GM10248 (cell line): ENCODE measurements at regions of chr3 and their contacts with region 1.

Region 1: DNA sequence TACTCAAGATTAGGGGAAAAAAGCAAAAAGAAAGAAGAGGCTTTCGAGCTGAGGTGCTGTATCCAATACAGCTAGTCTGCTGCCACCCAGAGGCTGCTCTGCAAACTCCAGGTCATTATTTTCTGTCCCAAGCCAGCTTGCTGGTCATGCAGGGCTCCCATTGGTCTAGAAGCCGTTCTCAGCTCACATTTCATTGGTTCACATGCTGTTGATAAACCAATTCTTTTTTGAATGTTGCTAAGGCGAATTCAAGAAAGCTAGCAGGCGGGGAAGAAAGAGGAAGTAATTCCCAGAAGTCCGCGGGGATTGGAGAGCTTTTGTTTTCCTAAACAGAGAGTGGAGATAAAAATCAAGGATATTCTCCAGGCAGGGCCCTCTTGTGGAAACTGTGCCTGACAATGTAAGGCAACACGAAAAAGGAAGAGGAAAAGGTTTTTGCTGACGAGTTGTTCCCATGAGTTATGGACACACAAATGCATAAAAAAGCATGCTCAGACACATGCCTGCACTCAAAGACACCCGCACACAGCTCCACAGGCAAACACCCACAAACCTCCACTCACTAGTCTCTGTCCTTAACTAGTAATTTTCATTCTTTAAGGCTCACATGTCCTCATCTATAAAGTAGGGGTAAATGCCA is 33.4 kb downstream of the FSTL1 start:
- DNase-seq: peak; percentile 91
- CTCF ChIP-seq: peak; percentile 73

Region 2: GRCh38 chr3:119517112-119517511 is 900.3 kb before region 1 on chr3:
- CTCF ChIA-PET with region 1: no interaction called
- POLR2A ChIA-PET with region 1: no interaction called
- DNase-seq: no peak
- CTCF ChIP-seq: no peak

Region 3: DNA sequence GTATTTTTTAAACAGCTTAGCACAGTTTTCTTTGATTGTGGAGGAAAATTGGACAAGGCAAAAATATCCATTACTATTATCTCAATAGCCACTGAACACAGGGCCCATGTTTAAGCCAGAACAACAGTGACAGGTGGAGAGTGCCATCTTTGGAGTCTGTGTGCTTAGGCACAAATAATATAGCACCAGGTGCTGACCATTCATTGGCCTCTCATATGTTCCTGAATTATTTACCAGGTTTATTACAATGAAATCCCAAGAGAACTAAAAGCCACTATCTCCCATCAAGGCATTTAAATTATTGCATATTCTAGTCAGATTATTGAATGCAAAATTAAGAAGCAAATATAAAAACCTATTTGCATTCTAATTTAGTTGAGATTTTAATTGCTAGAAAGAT is 172.0 kb before region 1 on chr3:
- CTCF ChIA-PET with region 1: interaction called, 121 read pairs
- POLR2A ChIA-PET with region 1: no interaction called
- DNase-seq: no peak
- CTCF ChIP-seq: no peak

Region 4: GRCh38 chr3:120357807-120358206 is 59.6 kb before region 1 on chr3:
- CTCF ChIA-PET with region 1: interaction called, 12 read pairs
- POLR2A ChIA-PET with region 1: no interaction called
- DNase-seq: no peak
- CTCF ChIP-seq: peak; percentile 14

Region 5: DNA sequence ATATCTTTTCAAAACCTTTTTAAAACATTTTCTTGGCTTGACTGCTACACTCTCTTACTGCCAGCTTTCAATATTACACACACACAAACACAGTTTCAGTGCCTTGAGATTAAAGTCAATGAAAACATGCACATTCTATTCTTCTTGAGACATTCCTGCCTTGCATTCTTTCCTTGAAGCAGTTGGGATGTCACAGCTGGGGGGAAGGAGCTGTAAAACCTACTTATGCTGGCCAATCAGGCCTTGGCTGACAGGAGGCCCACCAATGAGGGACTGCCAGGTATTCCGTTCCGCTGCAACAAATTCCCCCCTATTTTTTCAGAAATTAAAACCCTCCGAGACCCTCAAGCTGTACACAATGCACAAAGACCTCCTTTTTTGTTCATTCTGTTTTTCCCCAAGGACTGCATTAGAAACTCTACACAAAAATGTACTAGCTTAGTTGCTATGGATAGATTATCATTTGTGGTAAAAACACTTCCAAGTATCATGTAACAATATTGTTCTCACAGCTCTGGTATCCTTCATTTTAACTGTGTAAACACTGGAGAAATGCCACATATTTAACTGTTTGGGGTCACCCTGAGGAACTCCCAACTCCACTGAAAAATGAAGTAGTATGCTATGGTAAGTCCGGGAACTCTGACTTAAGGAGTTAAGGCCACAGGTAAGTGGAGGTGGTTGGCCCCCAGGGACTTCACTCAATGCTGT is 14.9 kb after region 1 on chr3:
- CTCF ChIA-PET with region 1: interaction called, 27 read pairs
- POLR2A ChIA-PET with region 1: no interaction called
- DNase-seq: no peak
- CTCF ChIP-seq: no peak

Region 6: GRCh38 chr3:120558771-120559241 is 141.4 kb after region 1 on chr3:
- CTCF ChIA-PET with region 1: interaction called, 85 read pairs
- POLR2A ChIA-PET with region 1: no interaction called
- DNase-seq: peak; percentile 82
- CTCF ChIP-seq: peak; percentile 99

Region 7: GRCh38 chr3:120622870-120623731 is 205.7 kb after region 1 on chr3:
- CTCF ChIA-PET with region 1: no interaction called
- POLR2A ChIA-PET with region 1: no interaction called
- DNase-seq: no peak
- CTCF ChIP-seq: no peak